MCF 10A (cell line): ENCODE measurements at regions of chr5 and their contacts with region 1.

Region 1: GRCh38 chr5:171207256-171207847 is 101.7 kb upstream of the TLX3 start:
- DNase-seq: peak; percentile 69
- H3K4me3 Mint-ChIP-seq: no peak overlapping the region
- H3K27ac Mint-ChIP-seq: no peak overlapping the region
- H3K4me1 Mint-ChIP-seq: peaks cover 4% of the 10 kb centered on the region
- H3K27me3 Mint-ChIP-seq: no peaks in the 10 kb centered on the region
- CTCF ChIP-seq: peak; percentile 74

Region 2: GRCh38 chr5:170360709-170361108 is 846.6 kb before region 1 on chr5:
- CTCF ChIA-PET with region 1: no interaction called
- POLR2A ChIA-PET with region 1: no interaction called
- intact Hi-C with region 1: no loop called
- DNase-seq: no peak
- H3K4me3 Mint-ChIP-seq: no peak overlapping the region
- H3K27ac Mint-ChIP-seq: no peak overlapping the region
- H3K4me1 Mint-ChIP-seq: no peaks in the 10 kb centered on the region
- H3K27me3 Mint-ChIP-seq: no peaks in the 10 kb centered on the region
- CTCF ChIP-seq: no peak

Region 3: GRCh38 chr5:171115519-171115918 is 91.8 kb before region 1 on chr5:
- CTCF ChIA-PET with region 1: no interaction called
- POLR2A ChIA-PET with region 1: no interaction called
- intact Hi-C with region 1: no loop called
- DNase-seq: no peak
- H3K4me3 Mint-ChIP-seq: no peak overlapping the region
- H3K27ac Mint-ChIP-seq: no peak overlapping the region
- H3K4me1 Mint-ChIP-seq: no peaks in the 10 kb centered on the region
- H3K27me3 Mint-ChIP-seq: no peaks in the 10 kb centered on the region
- CTCF ChIP-seq: no peak

Region 4: GRCh38 chr5:171226105-171226754 is 18.9 kb after region 1 on chr5:
- CTCF ChIA-PET with region 1: interaction called, 18 read pairs
- POLR2A ChIA-PET with region 1: no interaction called
- intact Hi-C with region 1: no loop called
- DNase-seq: no peak
- H3K4me3 Mint-ChIP-seq: no peak overlapping the region
- H3K27ac Mint-ChIP-seq: no peak overlapping the region
- H3K4me1 Mint-ChIP-seq: no peaks in the 10 kb centered on the region
- H3K27me3 Mint-ChIP-seq: no peaks in the 10 kb centered on the region
- CTCF ChIP-seq: peak; percentile 15

Region 5: GRCh38 chr5:171272996-171273970 is 65.9 kb after region 1 on chr5:
- CTCF ChIA-PET with region 1: interaction called, 5 read pairs
- POLR2A ChIA-PET with region 1: no interaction called
- intact Hi-C with region 1: loop called (anchors 5 kb)
- DNase-seq: peak; percentile 49
- H3K4me3 Mint-ChIP-seq: no peak overlapping the region
- H3K27ac Mint-ChIP-seq: no peak overlapping the region
- H3K4me1 Mint-ChIP-seq: peaks cover 21% of the 10 kb centered on the region
- H3K27me3 Mint-ChIP-seq: no peaks in the 10 kb centered on the region
- CTCF ChIP-seq: peak; percentile 32

Region 6: GRCh38 chr5:171323806-171324633 is 116.7 kb after region 1 on chr5:
- CTCF ChIA-PET with region 1: interaction called, 299 read pairs
- POLR2A ChIA-PET with region 1: no interaction called
- intact Hi-C with region 1: no loop called
- DNase-seq: no peak
- H3K4me3 Mint-ChIP-seq: no peak overlapping the region
- H3K27ac Mint-ChIP-seq: no peak overlapping the region
- H3K4me1 Mint-ChIP-seq: no peaks in the 10 kb centered on the region
- H3K27me3 Mint-ChIP-seq: peaks cover 41% of the 10 kb centered on the region
- CTCF ChIP-seq: no peak